ENCODE measurements at regions of chr1 and their contacts with region 1.

Region 1: GRCh38 chr1:193059268-193060225 is at the starts of genes RO60 and UCHL5:
- DNase-seq: peak; percentile 100
- H3K4me3 Mint-ChIP-seq: peak within 1 kb of the TSS; percentile 87
- H3K27ac Mint-ChIP-seq: peak within 1 kb of the TSS; percentile 97
- H3K4me1 Mint-ChIP-seq: peaks cover 38% of the 10 kb centered on the region
- H3K27me3 Mint-ChIP-seq: no peaks in the 10 kb centered on the region
- CTCF ChIP-seq: no peak
- total RNA-seq, gene RO60: 128 and 135 TPM in 2 replicates
- total RNA-seq, gene UCHL5: 79.2 and 94.4 TPM in 2 replicates

Region 2: GRCh38 chr1:193042766-193043691 is 16.5 kb before region 1 on chr1:
- CTCF ChIA-PET with region 1: interaction called, 5 read pairs
- POLR2A ChIA-PET with region 1: interaction called, 49 read pairs
- intact Hi-C with region 1: no loop called
- DNase-seq: no peak
- H3K4me3 Mint-ChIP-seq: no peak overlapping the region
- H3K27ac Mint-ChIP-seq: peak overlapping the region; percentile 40
- H3K4me1 Mint-ChIP-seq: no peaks in the 10 kb centered on the region
- H3K27me3 Mint-ChIP-seq: no peaks in the 10 kb centered on the region
- CTCF ChIP-seq: no peak

Region 3: DNA sequence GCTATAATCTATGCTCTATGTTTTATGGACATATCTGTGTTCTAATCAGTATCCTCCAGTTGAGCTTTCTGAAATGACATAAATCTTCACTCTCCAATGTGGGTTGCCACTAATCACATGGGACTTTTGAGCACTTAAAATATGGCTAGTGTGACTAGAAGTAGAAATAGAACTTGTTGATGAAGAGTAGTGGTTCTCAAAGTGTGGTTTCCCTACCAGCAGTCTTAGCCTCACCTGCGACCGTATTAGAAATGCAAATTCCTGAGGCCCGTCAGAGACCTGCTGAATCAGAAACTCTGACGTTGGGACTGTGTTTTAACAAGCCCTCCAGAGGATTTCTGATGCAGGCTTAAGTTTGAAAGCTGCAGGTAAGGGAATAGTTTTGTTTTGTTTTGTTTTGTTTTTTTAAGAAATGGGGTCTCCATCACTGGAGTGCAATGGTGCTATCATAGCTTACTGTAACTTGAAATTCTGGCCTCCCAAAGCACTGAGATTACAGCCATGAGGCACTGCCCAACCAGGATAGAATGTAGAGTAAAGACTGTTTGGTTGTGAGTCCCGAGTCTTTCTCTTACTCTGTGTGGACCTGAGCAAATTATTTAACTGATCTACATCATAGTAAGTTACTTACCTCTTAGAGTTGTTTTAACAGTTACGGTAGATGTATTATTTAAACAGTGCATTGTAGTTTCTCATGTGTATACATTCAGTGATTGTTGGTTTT is 24.0 kb after region 1 on chr1:
- CTCF ChIA-PET with region 1: interaction called, 3 read pairs
- POLR2A ChIA-PET with region 1: interaction called, 9 read pairs
- intact Hi-C with region 1: loop called (anchors 1 kb)
- DNase-seq: no peak
- H3K4me3 Mint-ChIP-seq: no peak overlapping the region
- H3K27ac Mint-ChIP-seq: no peak overlapping the region
- H3K4me1 Mint-ChIP-seq: no peaks in the 10 kb centered on the region
- H3K27me3 Mint-ChIP-seq: no peaks in the 10 kb centered on the region
- CTCF ChIP-seq: no peak

Region 4: DNA sequence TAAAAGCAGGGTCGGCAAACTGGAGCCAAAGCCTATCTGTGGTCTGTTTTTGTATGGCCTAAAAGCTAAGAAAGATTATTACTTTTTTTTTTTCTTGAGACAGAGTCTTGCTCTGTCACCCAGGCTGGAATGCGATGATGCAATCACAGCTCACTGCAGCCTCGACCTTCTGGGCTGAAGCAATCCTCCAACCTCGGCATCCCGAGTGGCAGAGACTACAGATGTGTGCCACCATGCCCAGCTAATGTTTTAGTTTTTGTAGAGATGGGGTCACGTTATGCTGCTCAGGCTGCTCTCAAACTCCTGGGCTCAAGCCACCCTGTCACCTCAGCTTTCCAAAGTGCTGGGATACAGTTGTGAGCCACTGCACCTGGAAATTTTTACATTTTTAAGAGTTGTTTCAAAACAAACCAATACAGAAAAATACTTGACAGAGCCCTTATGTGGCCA is 52.1 kb after region 1 on chr1:
- CTCF ChIA-PET with region 1: no interaction called
- POLR2A ChIA-PET with region 1: interaction called, 81 read pairs
- intact Hi-C with region 1: no loop called
- DNase-seq: peak; percentile 92
- H3K4me3 Mint-ChIP-seq: no peak overlapping the region
- H3K27ac Mint-ChIP-seq: peak overlapping the region; percentile 65
- H3K4me1 Mint-ChIP-seq: peaks cover 34% of the 10 kb centered on the region
- H3K27me3 Mint-ChIP-seq: no peaks in the 10 kb centered on the region
- CTCF ChIP-seq: no peak